Left lung (tissue), 14 donors: ENCODE measurements at regions of chr2 and their contacts with region 1.

Region 1: DNA sequence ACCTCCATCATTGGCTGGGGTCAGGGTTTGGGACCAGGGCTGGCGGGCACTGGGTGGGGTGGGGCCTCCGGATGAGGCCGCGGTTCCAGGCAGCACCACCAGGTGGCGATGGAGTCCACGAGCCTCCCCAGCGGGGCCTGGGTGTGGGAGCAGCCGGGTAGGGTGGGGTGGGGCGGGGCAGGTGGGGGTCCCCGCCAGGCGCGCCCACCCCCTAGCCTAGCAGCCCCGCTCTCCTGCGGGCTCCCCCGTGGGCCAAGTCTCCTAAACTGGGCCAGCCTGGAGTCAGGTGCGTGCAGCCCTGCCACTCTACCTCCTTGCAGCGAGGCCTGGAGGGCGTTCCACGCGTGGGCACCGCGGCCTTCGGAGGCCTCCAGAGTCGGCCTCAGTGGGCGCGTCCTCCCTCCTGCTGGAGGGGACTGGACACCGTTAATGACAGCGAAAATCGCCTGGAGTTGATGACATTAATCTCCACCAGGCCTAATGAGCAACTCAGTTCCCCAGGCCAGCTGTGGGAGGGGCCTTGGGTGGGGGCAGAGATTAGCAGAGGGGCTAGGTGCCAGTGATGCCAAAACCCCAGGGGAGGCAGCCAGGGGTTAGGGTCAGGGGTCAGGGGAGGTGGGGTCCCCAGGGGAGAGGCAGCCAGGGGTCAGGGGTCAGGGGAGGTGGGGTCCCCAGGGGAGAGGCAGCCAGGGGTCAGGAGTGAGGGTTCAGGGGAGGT is 187.6 kb downstream of the TWIST2 start:
- DNase-seq: peak in 2 of 4 donors; percentile 26 to 92
- ATAC-seq: peak; percentile 94
- H3K4me3 ChIP-seq: no peak overlapping the region
- H3K27ac ChIP-seq: no peak overlapping the region
- H3K4me1 ChIP-seq: no peaks in the 10 kb centered on the region
- H3K27me3 ChIP-seq: peaks cover 0 to 35% of the 10 kb centered on the region in 2 donors
- CTCF ChIP-seq: peak; percentile 90

Region 2: DNA sequence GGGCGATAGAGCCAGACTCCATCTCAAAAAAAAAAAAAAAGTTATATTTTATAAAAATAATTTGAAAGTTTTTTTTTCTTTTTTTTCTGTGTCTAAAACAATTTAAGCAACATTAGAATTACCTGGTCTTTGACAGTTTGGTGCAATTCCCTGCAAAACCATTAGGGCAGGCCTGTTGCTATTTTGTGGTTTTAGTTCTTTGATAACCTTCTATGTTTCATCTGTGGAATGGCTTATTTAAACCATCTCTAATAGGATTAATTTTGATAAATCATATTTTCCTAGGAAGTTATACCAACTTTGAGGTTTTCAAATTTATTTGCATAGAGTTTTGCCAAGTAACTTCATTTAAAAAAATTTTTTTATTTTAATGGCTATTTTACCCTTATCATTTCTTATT is 328.8 kb before region 1 on chr2:
- intact Hi-C with region 1: no loop called
- DNase-seq: no peak
- ATAC-seq: no peak
- H3K4me3 ChIP-seq: no peak overlapping the region
- H3K27ac ChIP-seq: no peak overlapping the region
- H3K4me1 ChIP-seq: no peaks in the 10 kb centered on the region
- H3K27me3 ChIP-seq: no peaks in the 10 kb centered on the region
- CTCF ChIP-seq: no peak

Region 3: DNA sequence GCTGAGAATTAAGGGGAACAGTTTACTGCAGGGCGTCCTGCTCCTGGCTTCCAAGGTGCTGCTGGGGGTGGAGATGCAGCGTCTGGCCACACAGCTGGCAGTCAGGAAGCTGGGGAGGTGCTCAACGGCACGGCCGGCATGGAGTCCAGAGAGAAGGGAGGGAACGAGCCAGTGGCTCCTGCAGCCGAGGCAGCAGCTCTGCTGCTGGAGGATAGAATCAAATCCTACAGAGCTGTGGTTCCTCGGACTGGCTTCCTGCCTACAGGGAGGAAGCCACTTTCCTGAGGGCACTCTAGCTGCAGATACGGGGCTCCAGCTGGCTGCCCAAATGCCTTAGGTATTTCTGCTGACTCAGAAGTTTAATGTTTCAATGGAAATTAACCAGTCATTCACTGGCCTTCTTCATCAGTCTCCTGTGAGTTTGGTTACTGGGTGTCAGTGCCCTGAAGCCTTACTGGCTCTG is 78.6 kb after region 1 on chr2:
- intact Hi-C with region 1: no loop called
- DNase-seq: peak in 2 of 4 donors; percentile 13 to 71
- ATAC-seq: peak; percentile 24
- H3K4me3 ChIP-seq: no peak overlapping the region
- H3K27ac ChIP-seq: peak overlapping the region in 1 of 2 donors; percentile 31
- H3K4me1 ChIP-seq: peaks cover 8 to 25% of the 10 kb centered on the region in 2 donors
- H3K27me3 ChIP-seq: no peaks in the 10 kb centered on the region
- CTCF ChIP-seq: no peak

Region 4: DNA sequence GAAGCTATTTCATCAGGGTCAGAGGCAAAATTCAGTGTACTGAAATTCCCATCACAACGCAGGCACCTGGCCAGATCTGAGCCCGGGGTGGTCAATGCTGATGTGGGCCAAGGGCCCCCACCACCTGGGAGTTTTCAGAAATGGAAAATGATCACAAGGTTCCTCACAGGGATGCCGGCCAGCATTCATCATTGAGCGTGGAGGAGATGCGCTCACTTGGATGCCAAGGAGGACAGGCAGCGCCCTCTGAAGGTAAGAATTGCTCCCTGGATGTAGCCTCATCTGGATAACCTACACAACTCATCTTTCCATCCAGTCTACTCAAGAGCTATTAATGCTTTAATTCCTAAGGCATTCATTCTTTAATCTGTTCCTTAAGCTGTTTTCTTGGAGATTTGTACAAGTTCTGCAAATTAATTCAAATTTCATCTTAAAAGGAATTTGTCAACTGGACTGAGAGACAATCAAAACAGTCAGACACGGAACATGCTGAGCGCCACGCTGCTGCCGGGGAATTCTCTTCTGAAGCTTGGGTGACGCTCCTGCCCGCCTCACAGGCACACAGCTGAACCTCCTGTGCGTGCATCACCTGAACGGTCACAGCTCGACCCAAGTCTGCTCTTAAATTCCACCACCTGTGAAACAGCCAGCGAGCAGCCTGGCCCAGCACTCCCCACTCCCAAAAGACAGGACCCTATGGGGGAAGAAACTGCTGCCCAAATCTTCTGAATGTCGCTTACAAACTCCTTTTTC is 158.6 kb after region 1 on chr2:
- intact Hi-C with region 1: no loop called
- DNase-seq: peak in 2 of 4 donors; percentile 19 to 39
- ATAC-seq: no peak
- H3K4me3 ChIP-seq: no peak overlapping the region
- H3K27ac ChIP-seq: no peak overlapping the region
- H3K4me1 ChIP-seq: peaks cover 0 to 3% of the 10 kb centered on the region in 2 donors
- H3K27me3 ChIP-seq: no peaks in the 10 kb centered on the region
- CTCF ChIP-seq: no peak

Region 5: GRCh38 chr2:239979243-239980023 is 943.9 kb after region 1 on chr2:
- intact Hi-C with region 1: loop called in 1 of 2 experiments (anchors 10 kb)
- DNase-seq: peak in 1 of 4 donors; percentile 58
- ATAC-seq: peak; percentile 59
- H3K4me3 ChIP-seq: no peak overlapping the region
- H3K27ac ChIP-seq: no peak overlapping the region
- H3K4me1 ChIP-seq: peaks cover 0 to 6% of the 10 kb centered on the region in 2 donors
- H3K27me3 ChIP-seq: no peaks in the 10 kb centered on the region
- CTCF ChIP-seq: no peak